ENCODE measurements at regions of chr3 and their contacts with region 1.

Region 1: DNA sequence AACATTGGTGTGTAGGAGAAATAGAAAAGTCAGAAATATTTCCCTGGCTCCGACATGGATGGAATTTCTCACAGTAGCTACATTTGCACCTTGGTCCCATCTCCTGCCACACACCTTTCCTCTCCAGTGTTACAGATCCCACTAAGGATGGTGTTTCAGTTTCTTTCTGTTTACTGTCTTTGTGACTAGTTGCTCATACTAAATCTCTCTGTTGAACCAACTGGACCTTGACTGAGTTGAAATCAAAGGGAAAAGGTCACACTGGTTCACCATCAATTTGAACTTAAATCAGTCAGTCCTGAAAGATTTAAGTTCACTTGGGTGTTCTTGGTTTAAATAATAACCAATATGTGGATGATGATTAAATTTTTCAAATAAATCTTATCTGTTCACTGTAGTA is 754.2 kb downstream of the OTOL1 start:
- DNase-seq: no peak
- H3K4me3 ChIP-seq: no peak overlapping the region
- H3K27ac ChIP-seq: no peak overlapping the region
- H3K4me1 ChIP-seq: no peaks in the 10 kb centered on the region
- H3K27me3 ChIP-seq: no peaks in the 10 kb centered on the region
- CTCF ChIP-seq: no peak
- EP300 ChIP-seq: no peak
- POLR2A ChIP-seq: no peak

Region 2: GRCh38 chr3:161713731-161714130 is 537.1 kb before region 1 on chr3:
- in situ Hi-C with region 1: no loop called
- intact Hi-C with region 1: no loop called
- DNase-seq: no peak
- H3K4me3 ChIP-seq: no peak overlapping the region
- H3K27ac ChIP-seq: no peak overlapping the region
- H3K4me1 ChIP-seq: no peaks in the 10 kb centered on the region
- H3K27me3 ChIP-seq: no peaks in the 10 kb centered on the region
- CTCF ChIP-seq: no peak
- EP300 ChIP-seq: no peak
- POLR2A ChIP-seq: no peak

Region 3: GRCh38 chr3:162274070-162274469 is 23.3 kb after region 1 on chr3:
- in situ Hi-C with region 1: no loop called
- intact Hi-C with region 1: loop called (anchors 1 kb)
- DNase-seq: no peak
- H3K4me3 ChIP-seq: no peak overlapping the region
- H3K27ac ChIP-seq: no peak overlapping the region
- H3K4me1 ChIP-seq: no peaks in the 10 kb centered on the region
- H3K27me3 ChIP-seq: no peaks in the 10 kb centered on the region
- CTCF ChIP-seq: no peak
- EP300 ChIP-seq: no peak
- POLR2A ChIP-seq: no peak